B cell (primary cell): ENCODE measurements at regions of chr5 and their contacts with region 1.

Region 1: GRCh38 chr5:138449501-138450239 is 10.8 kb downstream of the REEP2 start:
- DNase-seq: peak; percentile 85
- ATAC-seq: peak; percentile 95
- H3K4me3 ChIP-seq: peak overlapping the region in 2 of 5 experiments; percentile 5 to 19
- H3K4me3 Mint-ChIP-seq: no peak overlapping the region
- H3K27ac ChIP-seq: no peak overlapping the region
- H3K27ac Mint-ChIP-seq: peak overlapping the region; percentile 70
- H3K4me1 ChIP-seq: peaks cover 3 to 8% of the 10 kb centered on the region in 2 donors
- H3K4me1 Mint-ChIP-seq: peaks cover 6% of the 10 kb centered on the region
- H3K27me3 ChIP-seq: no peaks in the 10 kb centered on the region
- H3K27me3 Mint-ChIP-seq: no peaks in the 10 kb centered on the region
- CTCF ChIP-seq: peak; percentile 95

Region 2: GRCh38 chr5:138069068-138069600 is 380.5 kb before region 1 on chr5:
- CTCF ChIA-PET with region 1: no interaction called
- POLR2A ChIA-PET with region 1: no interaction called
- intact Hi-C with region 1: no loop called
- DNase-seq: no peak
- ATAC-seq: no peak
- H3K4me3 ChIP-seq: no peak overlapping the region
- H3K4me3 Mint-ChIP-seq: no peak overlapping the region
- H3K27ac ChIP-seq: no peak overlapping the region
- H3K27ac Mint-ChIP-seq: no peak overlapping the region
- H3K4me1 ChIP-seq: no peaks in the 10 kb centered on the region
- H3K4me1 Mint-ChIP-seq: peaks cover 4% of the 10 kb centered on the region
- H3K27me3 ChIP-seq: no peaks in the 10 kb centered on the region
- H3K27me3 Mint-ChIP-seq: no peaks in the 10 kb centered on the region
- CTCF ChIP-seq: peak; percentile 62

Region 3: DNA sequence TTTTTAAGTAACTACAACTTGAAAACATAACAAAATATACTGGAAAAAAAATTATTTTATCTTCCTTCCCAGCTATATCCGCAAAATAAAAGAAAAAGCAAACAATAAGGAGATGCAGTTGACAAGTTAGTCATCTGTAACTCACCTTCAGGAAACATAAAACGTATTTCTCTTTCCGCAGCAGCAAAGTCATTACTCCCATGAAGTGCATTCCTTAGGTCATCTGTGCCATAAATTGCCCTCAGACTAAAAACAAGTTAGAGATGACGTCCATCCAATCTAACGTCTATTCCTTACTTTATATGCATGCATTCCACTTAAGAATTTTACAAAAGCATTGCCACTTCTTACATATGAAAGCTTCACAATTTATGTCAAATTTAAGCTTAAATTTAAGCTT is 321.3 kb before region 1 on chr5:
- CTCF ChIA-PET with region 1: no interaction called
- POLR2A ChIA-PET with region 1: no interaction called
- intact Hi-C with region 1: no loop called
- DNase-seq: no peak
- ATAC-seq: no peak
- H3K4me3 ChIP-seq: no peak overlapping the region
- H3K4me3 Mint-ChIP-seq: no peak overlapping the region
- H3K27ac ChIP-seq: no peak overlapping the region
- H3K27ac Mint-ChIP-seq: no peak overlapping the region
- H3K4me1 ChIP-seq: peaks cover 0 to 4% of the 10 kb centered on the region in 2 donors
- H3K4me1 Mint-ChIP-seq: peaks cover 1% of the 10 kb centered on the region
- H3K27me3 ChIP-seq: peaks cover 0 to 7% (median 0%) of the 10 kb centered on the region in 4 experiments
- H3K27me3 Mint-ChIP-seq: peaks cover 17% of the 10 kb centered on the region
- CTCF ChIP-seq: no peak

Region 4: GRCh38 chr5:138438724-138439476 is 10.8 kb before region 1 on chr5 and contains the start of gene REEP2:
- CTCF ChIA-PET with region 1: interaction called, 45 read pairs
- POLR2A ChIA-PET with region 1: no interaction called
- intact Hi-C with region 1: no loop called
- DNase-seq: peak; percentile 78
- ATAC-seq: peak; percentile 86
- H3K4me3 ChIP-seq: peak within 1 kb of the TSS in 4 of 5 experiments; percentile 22 to 56 (median 47)
- H3K4me3 Mint-ChIP-seq: peak within 1 kb of the TSS; percentile 86
- H3K27ac ChIP-seq: no peak within 1 kb of the TSS
- H3K27ac Mint-ChIP-seq: peak within 1 kb of the TSS; percentile 8
- H3K4me1 ChIP-seq: peaks cover 11 to 13% of the 10 kb centered on the region in 2 donors
- H3K4me1 Mint-ChIP-seq: peaks cover 13% of the 10 kb centered on the region
- H3K27me3 ChIP-seq: peaks cover 0 to 11% (median 3%) of the 10 kb centered on the region in 4 experiments
- H3K27me3 Mint-ChIP-seq: peaks cover 4% of the 10 kb centered on the region
- CTCF ChIP-seq: no peak
- total RNA-seq, gene REEP2: 0.20 and 0.44 TPM in 2 replicates

Region 5: GRCh38 chr5:138503487-138504270 is 54.0 kb after region 1 on chr5:
- CTCF ChIA-PET with region 1: interaction called, 281 read pairs
- POLR2A ChIA-PET with region 1: no interaction called
- intact Hi-C with region 1: no loop called
- DNase-seq: peak; percentile 73
- ATAC-seq: peak; percentile 78
- H3K4me3 ChIP-seq: no peak overlapping the region
- H3K4me3 Mint-ChIP-seq: no peak overlapping the region
- H3K27ac ChIP-seq: no peak overlapping the region
- H3K27ac Mint-ChIP-seq: no peak overlapping the region
- H3K4me1 ChIP-seq: no peaks in the 10 kb centered on the region
- H3K4me1 Mint-ChIP-seq: no peaks in the 10 kb centered on the region
- H3K27me3 ChIP-seq: no peaks in the 10 kb centered on the region
- H3K27me3 Mint-ChIP-seq: no peaks in the 10 kb centered on the region
- CTCF ChIP-seq: peak; percentile 74

Region 6: GRCh38 chr5:138508963-138509362 is 59.3 kb after region 1 on chr5:
- CTCF ChIA-PET with region 1: interaction called, 281 read pairs
- POLR2A ChIA-PET with region 1: no interaction called
- intact Hi-C with region 1: no loop called
- DNase-seq: no peak
- ATAC-seq: no peak
- H3K4me3 ChIP-seq: no peak overlapping the region
- H3K4me3 Mint-ChIP-seq: no peak overlapping the region
- H3K27ac ChIP-seq: no peak overlapping the region
- H3K27ac Mint-ChIP-seq: no peak overlapping the region
- H3K4me1 ChIP-seq: no peaks in the 10 kb centered on the region
- H3K4me1 Mint-ChIP-seq: no peaks in the 10 kb centered on the region
- H3K27me3 ChIP-seq: no peaks in the 10 kb centered on the region
- H3K27me3 Mint-ChIP-seq: no peaks in the 10 kb centered on the region
- CTCF ChIP-seq: no peak

Region 7: GRCh38 chr5:138549414-138549813 is 99.7 kb after region 1 on chr5:
- CTCF ChIA-PET with region 1: interaction called, 11 read pairs
- POLR2A ChIA-PET with region 1: no interaction called
- intact Hi-C with region 1: no loop called
- DNase-seq: no peak
- ATAC-seq: no peak
- H3K4me3 ChIP-seq: no peak overlapping the region
- H3K4me3 Mint-ChIP-seq: no peak overlapping the region
- H3K27ac ChIP-seq: no peak overlapping the region
- H3K27ac Mint-ChIP-seq: no peak overlapping the region
- H3K4me1 ChIP-seq: peaks cover 9 to 10% of the 10 kb centered on the region in 2 donors
- H3K4me1 Mint-ChIP-seq: peaks cover 29% of the 10 kb centered on the region
- H3K27me3 ChIP-seq: no peaks in the 10 kb centered on the region
- H3K27me3 Mint-ChIP-seq: no peaks in the 10 kb centered on the region
- CTCF ChIP-seq: no peak

Region 8: DNA sequence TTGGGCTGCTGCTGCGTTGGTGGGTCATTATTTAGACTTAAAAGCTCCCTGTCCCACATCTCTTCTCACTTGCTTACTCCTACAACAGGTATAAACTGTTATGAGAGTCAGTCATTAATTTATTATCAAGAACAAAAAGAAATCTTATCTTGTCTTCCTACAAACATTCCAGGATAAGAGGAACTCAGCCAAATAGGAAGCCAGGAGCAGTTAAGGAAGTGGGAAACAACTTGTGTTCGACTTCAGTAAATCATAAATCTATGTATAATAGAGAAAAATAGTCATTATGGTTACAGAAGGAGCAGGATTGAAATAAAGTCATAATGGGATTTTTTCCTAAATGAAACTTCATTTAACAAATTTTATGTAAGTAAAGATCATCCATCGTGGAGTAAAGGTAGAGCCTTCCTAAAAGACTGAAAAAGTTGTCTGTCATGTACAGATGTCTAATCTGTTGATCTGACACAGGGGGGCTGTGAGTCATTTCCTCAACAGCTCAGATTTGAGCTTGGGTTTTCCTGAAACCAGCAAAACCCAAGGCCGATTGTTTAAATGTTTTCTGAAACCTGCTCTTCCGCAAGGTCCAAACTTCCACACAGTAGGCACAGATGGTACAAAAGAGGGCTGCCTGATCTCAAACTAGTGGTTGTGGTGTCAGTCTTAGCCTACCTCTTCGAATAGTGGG is 450.8 kb after region 1 on chr5:
- CTCF ChIA-PET with region 1: no interaction called
- POLR2A ChIA-PET with region 1: no interaction called
- intact Hi-C with region 1: no loop called
- DNase-seq: no peak
- ATAC-seq: no peak
- H3K4me3 ChIP-seq: no peak overlapping the region
- H3K4me3 Mint-ChIP-seq: no peak overlapping the region
- H3K27ac ChIP-seq: no peak overlapping the region
- H3K27ac Mint-ChIP-seq: no peak overlapping the region
- H3K4me1 ChIP-seq: no peaks in the 10 kb centered on the region
- H3K4me1 Mint-ChIP-seq: peaks cover 6% of the 10 kb centered on the region
- H3K27me3 ChIP-seq: no peaks in the 10 kb centered on the region
- H3K27me3 Mint-ChIP-seq: no peaks in the 10 kb centered on the region
- CTCF ChIP-seq: no peak

Region 9: DNA sequence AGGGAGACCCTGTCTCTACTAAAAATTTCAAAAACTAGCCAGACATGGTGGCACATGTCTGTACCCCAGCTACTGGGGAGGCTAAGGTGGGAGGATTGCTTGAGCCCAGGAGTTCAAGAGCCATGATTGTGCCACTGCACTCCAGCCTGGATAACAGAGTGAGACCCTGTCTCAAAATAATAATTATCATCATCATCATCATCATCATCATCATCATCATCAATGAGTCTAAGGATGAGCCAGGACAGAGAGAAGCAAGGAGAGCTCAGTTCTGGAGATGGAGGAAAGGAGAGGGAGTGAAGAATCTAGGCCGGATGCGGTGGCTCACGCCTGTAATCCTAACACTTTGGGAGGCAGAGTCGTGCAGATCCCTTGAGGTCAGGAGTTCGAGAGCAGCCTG is 807.1 kb after region 1 on chr5:
- CTCF ChIA-PET with region 1: no interaction called
- POLR2A ChIA-PET with region 1: no interaction called
- intact Hi-C with region 1: no loop called
- DNase-seq: no peak
- ATAC-seq: no peak
- H3K4me3 ChIP-seq: no peak overlapping the region
- H3K4me3 Mint-ChIP-seq: no peak overlapping the region
- H3K27ac ChIP-seq: no peak overlapping the region
- H3K27ac Mint-ChIP-seq: no peak overlapping the region
- H3K4me1 ChIP-seq: no peaks in the 10 kb centered on the region
- H3K4me1 Mint-ChIP-seq: no peaks in the 10 kb centered on the region
- H3K27me3 ChIP-seq: peaks cover 0 to 1% (median 0%) of the 10 kb centered on the region in 4 experiments
- H3K27me3 Mint-ChIP-seq: peaks cover 21% of the 10 kb centered on the region
- CTCF ChIP-seq: no peak